Activated CD4-positive, alpha-beta T cell treated with anti-CD3 and anti-CD28 coated beads, Interleukin-2, amount 10 ng/mL, durations not matched to agents 7 days and 5 days (primary cell): ENCODE measurements at regions of chr20 and their contacts with region 1.

Region 1: GRCh38 chr20:4502756-4503155 is 219.0 kb upstream of the PRND start:
- DNase-seq: no peak
- H3K4me3 Mint-ChIP-seq: no peak overlapping the region
- H3K27ac Mint-ChIP-seq: no peak overlapping the region
- H3K4me1 Mint-ChIP-seq: no peaks in the 10 kb centered on the region
- H3K27me3 Mint-ChIP-seq: peaks cover 19% of the 10 kb centered on the region

Region 2: GRCh38 chr20:4327956-4328355 is 174.8 kb before region 1 on chr20:
- CTCF ChIA-PET with region 1: no interaction called
- POLR2A ChIA-PET with region 1: interaction called, 10 read pairs
- DNase-seq: no peak
- H3K4me3 Mint-ChIP-seq: no peak overlapping the region
- H3K27ac Mint-ChIP-seq: no peak overlapping the region
- H3K4me1 Mint-ChIP-seq: no peaks in the 10 kb centered on the region
- H3K27me3 Mint-ChIP-seq: peaks cover 4% of the 10 kb centered on the region